Activated CD4-positive, alpha-beta T cell treated with anti-CD3 and anti-CD28 coated beads, Interleukin-2, amount 10 ng/mL, durations not matched to agents 24 days and 14 days (primary cell): ENCODE measurements at regions of chr10 and their contacts with region 1.

Region 1: DNA sequence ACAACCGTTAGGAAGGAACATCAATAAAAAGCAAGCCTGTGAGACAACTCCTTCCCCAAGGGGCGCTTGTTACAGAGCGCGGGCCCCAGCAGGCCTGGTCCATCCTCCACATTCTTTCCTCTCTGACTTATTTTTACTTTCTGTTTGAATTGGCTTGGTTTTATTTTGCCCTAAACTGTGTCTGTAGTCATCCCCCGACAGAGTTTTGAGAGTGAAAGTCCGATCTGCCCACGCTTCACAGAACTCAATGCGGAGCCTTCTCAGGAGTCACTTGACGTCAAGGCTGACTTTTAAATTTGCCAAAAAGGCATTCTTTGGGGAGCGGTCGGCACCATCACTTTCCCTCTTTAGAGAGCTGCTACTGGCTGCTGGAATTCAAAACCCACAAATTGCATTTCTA is 150.1 kb upstream of the KLF6 start:
- DNase-seq: peak; percentile 93
- H3K4me3 Mint-ChIP-seq: peak overlapping the region; percentile 65
- H3K27ac Mint-ChIP-seq: peak overlapping the region; percentile 88
- H3K4me1 Mint-ChIP-seq: peaks cover 59% of the 10 kb centered on the region
- H3K27me3 Mint-ChIP-seq: no peaks in the 10 kb centered on the region

Region 2: GRCh38 chr10:3785257-3785850 is 149.8 kb before region 1 on chr10:
- intact Hi-C with region 1: loop called (anchors 1 kb)
- DNase-seq: peak; percentile 100
- H3K4me3 Mint-ChIP-seq: peak overlapping the region; percentile 91
- H3K27ac Mint-ChIP-seq: peak overlapping the region; percentile 99
- H3K4me1 Mint-ChIP-seq: peaks cover 48% of the 10 kb centered on the region
- H3K27me3 Mint-ChIP-seq: no peaks in the 10 kb centered on the region

Region 3: DNA sequence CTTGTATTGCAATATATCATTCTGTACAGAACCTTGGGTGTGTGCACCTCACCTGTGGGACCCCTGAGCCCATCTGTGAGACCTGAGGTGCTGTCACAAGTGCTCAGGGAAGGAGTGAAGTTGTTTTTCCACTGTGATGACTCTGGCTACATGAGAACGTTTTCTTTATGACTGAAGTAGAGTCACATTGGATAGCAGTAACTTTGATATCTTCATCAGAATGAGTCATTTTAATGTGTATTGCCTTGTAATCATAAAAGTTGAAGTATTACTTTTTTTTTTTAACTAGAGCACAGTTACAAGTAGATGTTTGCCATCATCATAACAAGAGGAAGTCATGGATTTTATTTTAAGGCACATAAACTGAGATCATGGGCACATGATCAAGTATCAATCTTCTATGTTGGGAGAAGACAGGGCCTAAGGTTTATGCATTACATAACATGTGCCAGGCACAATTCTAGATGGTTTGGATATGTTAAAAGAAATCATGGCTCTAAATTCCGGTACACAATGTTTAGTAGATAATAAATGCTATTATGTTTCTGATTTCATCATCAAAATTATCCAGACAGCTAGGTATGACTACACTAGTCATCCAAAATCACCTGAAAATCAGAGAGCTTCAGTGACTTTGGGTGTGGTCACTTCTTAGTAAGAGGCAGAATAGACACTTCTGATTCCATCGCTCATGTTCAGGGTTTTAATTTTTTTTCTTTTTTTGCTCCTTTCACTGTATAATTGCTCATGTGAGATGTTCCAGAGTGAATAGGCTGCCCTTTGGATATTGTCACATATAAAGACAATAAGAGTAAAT is 67.5 kb before region 1 on chr10:
- intact Hi-C with region 1: loop called (anchors 1 kb)
- DNase-seq: no peak
- H3K4me3 Mint-ChIP-seq: no peak overlapping the region
- H3K27ac Mint-ChIP-seq: peak overlapping the region; percentile 91
- H3K4me1 Mint-ChIP-seq: peaks cover 61% of the 10 kb centered on the region
- H3K27me3 Mint-ChIP-seq: no peaks in the 10 kb centered on the region

Region 4: GRCh38 chr10:3948843-3949242 is 13.7 kb after region 1 on chr10:
- intact Hi-C with region 1: loop called (anchors 1 kb)
- DNase-seq: peak; percentile 92
- H3K4me3 Mint-ChIP-seq: peak overlapping the region; percentile 50
- H3K27ac Mint-ChIP-seq: peak overlapping the region; percentile 90
- H3K4me1 Mint-ChIP-seq: peaks cover 49% of the 10 kb centered on the region
- H3K27me3 Mint-ChIP-seq: no peaks in the 10 kb centered on the region

Region 5: GRCh38 chr10:4067531-4067930 is 132.4 kb after region 1 on chr10:
- intact Hi-C with region 1: loop called (anchors 5 kb)
- DNase-seq: peak; percentile 69
- H3K4me3 Mint-ChIP-seq: no peak overlapping the region
- H3K27ac Mint-ChIP-seq: no peak overlapping the region
- H3K4me1 Mint-ChIP-seq: peaks cover 15% of the 10 kb centered on the region
- H3K27me3 Mint-ChIP-seq: no peaks in the 10 kb centered on the region

Region 6: GRCh38 chr10:4775808-4776207 is 840.7 kb after region 1 on chr10:
- intact Hi-C with region 1: loop called (anchors 5 kb)
- DNase-seq: no peak
- H3K4me3 Mint-ChIP-seq: no peak overlapping the region
- H3K27ac Mint-ChIP-seq: peak overlapping the region; percentile 83
- H3K4me1 Mint-ChIP-seq: peaks cover 5% of the 10 kb centered on the region
- H3K27me3 Mint-ChIP-seq: peaks cover 46% of the 10 kb centered on the region